IMR-90 (cell line): ENCODE measurements at regions of chr12 and their contacts with region 1.

Region 1: DNA sequence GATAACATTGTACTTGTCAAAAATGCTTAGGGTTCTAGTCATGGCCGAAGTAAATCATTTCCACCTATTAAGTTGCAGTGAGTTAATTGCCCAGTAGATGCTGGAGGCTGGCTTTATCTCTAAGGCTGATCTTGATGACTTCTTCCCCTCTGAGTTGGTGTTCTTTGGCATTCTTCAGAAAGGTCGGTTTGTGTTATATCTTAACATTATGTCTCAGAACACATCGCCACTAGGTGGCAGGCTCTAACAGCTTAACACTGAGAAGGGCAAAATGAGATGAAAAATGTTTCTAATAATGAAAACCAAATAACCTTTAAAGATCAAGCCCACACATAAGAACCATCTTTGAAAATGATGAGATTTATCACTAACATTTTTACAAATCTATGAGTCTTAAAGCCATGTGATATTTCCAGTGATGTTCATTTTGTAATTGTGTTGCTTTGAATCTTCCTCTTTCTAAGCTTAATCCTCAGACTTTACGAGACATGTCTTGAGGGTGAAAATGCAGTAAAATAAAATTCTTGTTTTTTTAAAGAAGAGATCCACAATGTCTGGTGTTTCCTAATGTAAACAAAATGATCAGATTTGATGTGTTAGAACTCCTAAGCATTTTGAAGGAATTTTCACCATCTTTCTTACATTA is 28.6 kb downstream of the SUDS3 start:
- DNase-seq: peak; percentile 68
- ATAC-seq: peak; percentile 68
- H3K4me3 ChIP-seq: no peak overlapping the region
- H3K27ac ChIP-seq: no peak overlapping the region
- H3K4me1 ChIP-seq: peaks cover 1% of the 10 kb centered on the region; the same call in 1 of the 2 replicates
- H3K27me3 ChIP-seq: no peaks in the 10 kb centered on the region
- CTCF ChIP-seq: peak; percentile 75
- POLR2A ChIP-seq: 0 out of 2 replicates have a peak, but pooled peaks have one; percentile 27
- RAD21 ChIP-seq: peak; percentile 85

Region 2: GRCh38 chr12:117936722-117937484 is 468.1 kb before region 1 on chr12:
- CTCF ChIA-PET with region 1: no interaction called
- POLR2A ChIA-PET with region 1: no interaction called
- dilution Hi-C with region 1: no loop called
- in situ Hi-C with region 1: no loop called
- intact Hi-C with region 1: no loop called
- DNase-seq: no peak
- ATAC-seq: no peak
- H3K4me3 ChIP-seq: no peak overlapping the region
- H3K27ac ChIP-seq: no peak overlapping the region
- H3K4me1 ChIP-seq: no peaks in the 10 kb centered on the region
- H3K27me3 ChIP-seq: no peaks in the 10 kb centered on the region
- CTCF ChIP-seq: no peak
- POLR2A ChIP-seq: no peak
- RAD21 ChIP-seq: no peak

Region 3: DNA sequence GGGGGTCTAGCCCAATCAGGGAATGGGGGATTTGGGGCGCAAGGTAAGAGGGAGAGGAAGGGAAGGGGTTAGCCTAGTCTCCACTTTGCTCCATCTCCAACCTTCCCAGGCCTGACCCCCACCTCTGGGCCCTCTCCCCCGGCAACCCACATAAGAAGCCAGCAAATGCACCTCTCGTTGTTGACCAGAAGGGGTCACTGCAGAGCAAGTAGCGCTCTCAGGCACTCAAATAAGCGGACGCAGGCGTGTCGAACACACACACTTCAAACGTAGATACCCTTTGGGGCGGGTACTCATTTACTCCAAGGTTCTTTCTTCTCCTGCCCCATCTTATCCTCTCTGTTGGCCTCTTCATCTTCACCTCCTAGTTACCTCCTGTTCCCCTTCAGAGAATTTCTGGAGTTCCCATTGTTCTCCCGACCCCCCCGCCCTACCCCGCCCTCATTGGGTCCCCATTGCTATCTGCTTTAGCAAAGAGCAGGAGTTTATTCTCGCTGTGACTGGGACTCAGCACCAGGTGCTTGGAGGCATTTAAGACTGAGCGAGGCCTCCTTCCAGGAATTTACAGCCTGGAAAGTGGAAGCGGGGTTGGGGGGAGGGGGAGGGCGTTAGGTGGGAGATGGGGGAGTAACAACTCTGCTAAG is 574.9 kb after region 1 on chr12:
- CTCF ChIA-PET with region 1: no interaction called
- POLR2A ChIA-PET with region 1: no interaction called
- dilution Hi-C with region 1: no loop called
- in situ Hi-C with region 1: no loop called
- intact Hi-C with region 1: loop called (anchors 10 kb)
- DNase-seq: peak; percentile 24
- ATAC-seq: 0 out of 2 replicates have a peak, but pooled peaks have one; percentile 32
- H3K4me3 ChIP-seq: no peak overlapping the region
- H3K27ac ChIP-seq: no peak overlapping the region
- H3K4me1 ChIP-seq: no peaks in the 10 kb centered on the region
- H3K27me3 ChIP-seq: no peaks in the 10 kb centered on the region
- CTCF ChIP-seq: peak; percentile 41
- POLR2A ChIP-seq: no peak
- RAD21 ChIP-seq: peak; percentile 40; the same call in 1 of the 2 replicates

Region 4: DNA sequence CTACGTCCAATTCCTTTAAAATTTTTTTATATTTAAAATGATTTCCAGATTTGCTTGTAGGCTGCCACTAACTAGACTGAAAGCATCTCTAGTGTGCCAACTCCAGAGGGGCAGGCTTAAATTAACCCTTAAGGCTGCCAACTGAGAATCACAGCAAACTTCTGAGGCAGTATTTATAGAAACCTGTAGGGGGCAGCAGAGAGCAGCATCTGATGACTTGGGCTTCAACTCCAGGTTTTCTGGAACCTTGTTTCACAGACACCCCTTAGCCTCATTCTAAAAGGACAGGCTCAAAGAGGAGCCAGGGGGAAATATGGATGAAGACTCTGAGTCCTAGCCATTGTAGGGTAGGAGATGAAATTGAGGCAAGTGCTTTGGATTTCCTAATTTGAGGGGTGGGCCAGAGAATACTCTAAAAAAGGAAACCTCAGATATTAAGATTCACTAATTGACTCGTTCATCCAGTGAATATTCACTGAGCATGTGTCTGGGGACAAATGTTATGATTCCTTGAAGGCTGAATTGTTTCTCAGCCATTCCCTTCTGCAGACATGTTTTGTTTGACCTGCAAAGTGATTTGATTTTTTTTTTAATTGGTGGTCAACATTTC is 710.4 kb after region 1 on chr12:
- CTCF ChIA-PET with region 1: no interaction called
- POLR2A ChIA-PET with region 1: no interaction called
- dilution Hi-C with region 1: no loop called
- in situ Hi-C with region 1: no loop called
- intact Hi-C with region 1: loop called (anchors 5 kb)
- DNase-seq: peak; percentile 31
- ATAC-seq: peak; percentile 51
- H3K4me3 ChIP-seq: no peak overlapping the region
- H3K27ac ChIP-seq: no peak overlapping the region
- H3K4me1 ChIP-seq: no peaks in the 10 kb centered on the region
- H3K27me3 ChIP-seq: no peaks in the 10 kb centered on the region
- CTCF ChIP-seq: peak; percentile 75
- POLR2A ChIP-seq: no peak
- RAD21 ChIP-seq: peak; percentile 83

Region 5: GRCh38 chr12:119412811-119413794 is 1008.1 kb after region 1 on chr12:
- CTCF ChIA-PET with region 1: no interaction called
- POLR2A ChIA-PET with region 1: no interaction called
- dilution Hi-C with region 1: no loop called
- in situ Hi-C with region 1: no loop called
- intact Hi-C with region 1: loop called (anchors 1 kb)
- DNase-seq: peak; percentile 59
- ATAC-seq: peak; percentile 77
- H3K4me3 ChIP-seq: no peak overlapping the region
- H3K27ac ChIP-seq: no peak overlapping the region
- H3K4me1 ChIP-seq: no peaks in the 10 kb centered on the region
- H3K27me3 ChIP-seq: no peaks in the 10 kb centered on the region
- CTCF ChIP-seq: peak; percentile 81
- POLR2A ChIP-seq: no peak
- RAD21 ChIP-seq: peak; percentile 86

Region 6: GRCh38 chr12:119544765-119545625 is 1140.0 kb after region 1 on chr12:
- CTCF ChIA-PET with region 1: no interaction called
- POLR2A ChIA-PET with region 1: no interaction called
- dilution Hi-C with region 1: no loop called
- in situ Hi-C with region 1: loop called (anchors 10 kb)
- intact Hi-C with region 1: loop called (anchors 1 kb)
- DNase-seq: peak; percentile 70
- ATAC-seq: peak; percentile 97
- H3K4me3 ChIP-seq: no peak overlapping the region
- H3K27ac ChIP-seq: no peak overlapping the region
- H3K4me1 ChIP-seq: no peaks in the 10 kb centered on the region
- H3K27me3 ChIP-seq: no peaks in the 10 kb centered on the region
- CTCF ChIP-seq: peak; percentile 83
- POLR2A ChIP-seq: no peak
- RAD21 ChIP-seq: peak; percentile 86